IMR-90 (cell line): ENCODE measurements at regions of chr4 and their contacts with region 1.

Region 1: GRCh38 chr4:88514557-88515511 is 8.7 kb downstream of the PYURF start:
- DNase-seq: no peak
- ATAC-seq: peak; percentile 47
- H3K4me3 ChIP-seq: no peak overlapping the region
- H3K27ac ChIP-seq: no peak overlapping the region
- H3K4me1 ChIP-seq: no peaks in the 10 kb centered on the region
- H3K27me3 ChIP-seq: peaks cover 2% of the 10 kb centered on the region; the same call in 1 of the 2 replicates
- CTCF ChIP-seq: no peak
- POLR2A ChIP-seq: no peak
- RAD21 ChIP-seq: no peak

Region 2: GRCh38 chr4:88033309-88033708 is 481.5 kb before region 1 on chr4:
- CTCF ChIA-PET with region 1: no interaction called
- POLR2A ChIA-PET with region 1: no interaction called
- dilution Hi-C with region 1: no loop called
- in situ Hi-C with region 1: loop called (anchors 5 kb)
- intact Hi-C with region 1: loop called (anchors 5 kb)
- DNase-seq: peak; percentile 72
- ATAC-seq: peak; percentile 78
- H3K4me3 ChIP-seq: no peak overlapping the region
- H3K27ac ChIP-seq: no peak overlapping the region
- H3K4me1 ChIP-seq: peaks cover 8% of the 10 kb centered on the region
- H3K27me3 ChIP-seq: no peaks in the 10 kb centered on the region
- CTCF ChIP-seq: peak; percentile 74
- POLR2A ChIP-seq: no peak
- RAD21 ChIP-seq: peak; percentile 80

Region 3: GRCh38 chr4:88211473-88212252 is 303.2 kb before region 1 on chr4:
- CTCF ChIA-PET with region 1: interaction called, 10 read pairs
- POLR2A ChIA-PET with region 1: no interaction called
- dilution Hi-C with region 1: no loop called
- in situ Hi-C with region 1: loop called (anchors 5 kb)
- intact Hi-C with region 1: no loop called
- DNase-seq: peak; percentile 46
- ATAC-seq: peak; percentile 70
- H3K4me3 ChIP-seq: no peak overlapping the region
- H3K27ac ChIP-seq: no peak overlapping the region
- H3K4me1 ChIP-seq: no peaks in the 10 kb centered on the region
- H3K27me3 ChIP-seq: peaks cover 11% of the 10 kb centered on the region
- CTCF ChIP-seq: peak; percentile 88
- POLR2A ChIP-seq: peak; percentile 44; the same call in 1 of the 2 replicates
- RAD21 ChIP-seq: peak; percentile 96

Region 4: DNA sequence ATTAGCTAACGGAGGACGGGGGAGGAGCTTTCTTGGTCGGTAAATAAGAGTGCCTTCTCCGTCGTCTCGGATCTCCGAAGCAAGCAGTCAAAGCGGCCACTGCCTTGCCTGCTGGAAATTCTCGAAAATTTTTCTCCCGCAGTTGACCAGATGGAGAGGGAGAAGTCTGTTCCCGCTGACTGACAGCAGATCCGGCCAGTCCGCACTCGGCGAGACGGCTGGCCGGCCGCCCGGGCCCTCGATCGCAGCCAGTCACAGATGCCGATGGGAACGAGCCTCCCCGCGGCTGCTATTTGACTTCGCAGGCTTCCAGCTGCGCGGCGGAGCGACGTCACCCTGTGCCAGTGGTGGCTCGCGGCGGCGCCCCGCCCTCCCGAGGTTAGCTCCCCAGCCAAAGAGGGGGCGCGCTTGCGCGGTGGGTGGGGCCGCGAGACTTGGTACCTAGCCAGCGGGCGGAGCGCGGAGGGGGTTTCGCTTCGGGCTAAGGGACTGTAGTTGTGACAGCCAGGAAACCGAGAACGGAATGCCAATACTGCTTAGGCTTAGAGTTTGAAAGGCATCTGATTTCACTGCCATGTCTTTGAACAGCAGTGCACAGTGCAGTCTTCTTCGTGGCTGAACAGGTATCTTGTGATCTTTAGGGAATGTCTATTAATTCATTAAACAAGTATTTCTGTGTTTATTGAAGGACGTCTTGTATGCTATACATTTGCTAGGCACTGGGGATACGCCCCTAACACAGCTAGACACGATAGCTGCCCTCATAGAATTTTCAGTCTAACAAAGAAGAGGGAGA is 230.2 kb before region 1 on chr4 and contains the start of gene PPM1K:
- CTCF ChIA-PET with region 1: no interaction called
- POLR2A ChIA-PET with region 1: no interaction called
- dilution Hi-C with region 1: no loop called
- in situ Hi-C with region 1: loop called (anchors 10 kb)
- intact Hi-C with region 1: loop called (anchors 5 kb)
- DNase-seq: peak; percentile 98
- ATAC-seq: peak; percentile 96
- H3K4me3 ChIP-seq: peak within 1 kb of the TSS; percentile 74
- H3K27ac ChIP-seq: peak within 1 kb of the TSS; percentile 55
- H3K4me1 ChIP-seq: peaks cover 3% of the 10 kb centered on the region; the same call in 1 of the 2 replicates
- H3K27me3 ChIP-seq: peaks cover 3% of the 10 kb centered on the region; the same call in 1 of the 2 replicates
- CTCF ChIP-seq: peak; percentile 22; the same call in 1 of the 2 replicates
- POLR2A ChIP-seq: peak; percentile 54
- RAD21 ChIP-seq: no peak
- total RNA-seq, gene PPM1K: 11.5 and 11.9 TPM in 2 replicates

Region 5: GRCh38 chr4:88378691-88379559 is 135.9 kb before region 1 on chr4 and contains the start of gene HERC6:
- CTCF ChIA-PET with region 1: no interaction called
- POLR2A ChIA-PET with region 1: no interaction called
- dilution Hi-C with region 1: no loop called
- in situ Hi-C with region 1: loop called (anchors 10 kb)
- intact Hi-C with region 1: loop called (anchors 1 kb)
- DNase-seq: peak; percentile 78
- ATAC-seq: peak; percentile 99
- H3K4me3 ChIP-seq: peak within 1 kb of the TSS; percentile 66
- H3K27ac ChIP-seq: peak within 1 kb of the TSS; percentile 27
- H3K4me1 ChIP-seq: no peaks in the 10 kb centered on the region
- H3K27me3 ChIP-seq: peaks cover 5% of the 10 kb centered on the region
- CTCF ChIP-seq: peak; percentile 54
- POLR2A ChIP-seq: no peak
- RAD21 ChIP-seq: no peak
- total RNA-seq, gene HERC6: 0.83 and 1.6 TPM in 2 replicates